ENCODE measurements at regions of chr3 and their contacts with region 1.

Region 1: GRCh38 chr3:12706504-12707253 is 42.8 kb upstream of the RAF1 start:
- DNase-seq: peak; percentile 77
- H3K4me3 ChIP-seq: no peak overlapping the region
- H3K27ac ChIP-seq: no peak overlapping the region
- H3K4me1 ChIP-seq: peaks cover 32% of the 10 kb centered on the region
- H3K27me3 ChIP-seq: no peaks in the 10 kb centered on the region
- CTCF ChIP-seq: peak; percentile 92 to 96

Region 2: GRCh38 chr3:12014613-12015012 is 692.1 kb before region 1 on chr3:
- CTCF ChIA-PET with region 1: no interaction called
- dilution Hi-C with region 1: no loop called
- in situ Hi-C with region 1: no loop called
- intact Hi-C with region 1: no loop called
- DNase-seq: no peak
- H3K4me3 ChIP-seq: no peak overlapping the region
- H3K27ac ChIP-seq: no peak overlapping the region
- H3K4me1 ChIP-seq: no peaks in the 10 kb centered on the region
- H3K27me3 ChIP-seq: peaks cover 3% of the 10 kb centered on the region
- CTCF ChIP-seq: no peak

Region 3: DNA sequence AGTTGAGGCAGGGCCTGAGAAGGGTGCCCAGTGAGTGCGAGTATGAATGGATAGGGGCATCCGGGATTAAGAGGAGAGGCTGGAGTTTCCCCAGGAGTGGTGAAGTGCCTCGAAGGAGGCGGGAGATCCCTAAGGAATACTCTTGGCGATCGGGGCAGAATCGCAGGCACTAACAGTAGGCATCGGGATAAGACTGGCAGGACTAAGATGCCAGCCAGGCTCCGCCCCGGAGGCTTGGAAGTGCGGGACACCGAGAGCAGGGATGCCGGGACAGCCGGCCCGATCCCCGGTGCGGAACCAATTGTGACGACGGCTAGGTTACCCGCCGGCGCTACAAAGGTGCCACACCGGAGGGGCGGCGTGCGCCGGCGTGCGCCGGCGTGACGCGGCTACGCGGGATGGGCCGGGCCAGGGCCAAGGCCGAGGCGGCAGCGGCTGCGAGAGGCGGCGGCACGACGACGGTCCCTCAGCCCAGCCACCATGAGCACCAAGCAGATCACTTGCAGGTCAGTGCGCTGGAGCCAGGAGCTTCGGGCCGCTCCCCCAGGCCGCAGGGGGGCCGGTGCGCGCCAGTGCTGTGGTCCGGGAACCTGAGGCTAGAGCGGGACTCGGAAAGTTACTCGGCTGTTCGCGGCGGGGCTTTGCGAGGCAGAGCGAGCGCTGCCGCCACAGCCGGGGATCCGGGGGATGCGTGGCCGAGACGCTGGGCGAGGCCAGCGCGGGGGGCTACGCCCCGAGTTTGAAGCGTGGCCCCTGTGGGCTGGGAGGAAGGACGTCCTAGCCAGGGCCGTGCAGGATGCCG is 149.8 kb before region 1 on chr3 and contains the start of gene MKRN2:
- CTCF ChIA-PET with region 1: no interaction called
- dilution Hi-C with region 1: no loop called
- in situ Hi-C with region 1: no loop called
- intact Hi-C with region 1: loop called (anchors 2 kb)
- DNase-seq: peak; percentile 89
- H3K4me3 ChIP-seq: peak within 1 kb of the TSS; percentile 95 to 97 (median 96)
- H3K27ac ChIP-seq: peak within 1 kb of the TSS; percentile 87
- H3K4me1 ChIP-seq: peaks cover 19% of the 10 kb centered on the region
- H3K27me3 ChIP-seq: no peaks in the 10 kb centered on the region
- CTCF ChIP-seq: no peak
- total RNA-seq, gene MKRN2: 26.3 to 35.0 TPM

Region 4: DNA sequence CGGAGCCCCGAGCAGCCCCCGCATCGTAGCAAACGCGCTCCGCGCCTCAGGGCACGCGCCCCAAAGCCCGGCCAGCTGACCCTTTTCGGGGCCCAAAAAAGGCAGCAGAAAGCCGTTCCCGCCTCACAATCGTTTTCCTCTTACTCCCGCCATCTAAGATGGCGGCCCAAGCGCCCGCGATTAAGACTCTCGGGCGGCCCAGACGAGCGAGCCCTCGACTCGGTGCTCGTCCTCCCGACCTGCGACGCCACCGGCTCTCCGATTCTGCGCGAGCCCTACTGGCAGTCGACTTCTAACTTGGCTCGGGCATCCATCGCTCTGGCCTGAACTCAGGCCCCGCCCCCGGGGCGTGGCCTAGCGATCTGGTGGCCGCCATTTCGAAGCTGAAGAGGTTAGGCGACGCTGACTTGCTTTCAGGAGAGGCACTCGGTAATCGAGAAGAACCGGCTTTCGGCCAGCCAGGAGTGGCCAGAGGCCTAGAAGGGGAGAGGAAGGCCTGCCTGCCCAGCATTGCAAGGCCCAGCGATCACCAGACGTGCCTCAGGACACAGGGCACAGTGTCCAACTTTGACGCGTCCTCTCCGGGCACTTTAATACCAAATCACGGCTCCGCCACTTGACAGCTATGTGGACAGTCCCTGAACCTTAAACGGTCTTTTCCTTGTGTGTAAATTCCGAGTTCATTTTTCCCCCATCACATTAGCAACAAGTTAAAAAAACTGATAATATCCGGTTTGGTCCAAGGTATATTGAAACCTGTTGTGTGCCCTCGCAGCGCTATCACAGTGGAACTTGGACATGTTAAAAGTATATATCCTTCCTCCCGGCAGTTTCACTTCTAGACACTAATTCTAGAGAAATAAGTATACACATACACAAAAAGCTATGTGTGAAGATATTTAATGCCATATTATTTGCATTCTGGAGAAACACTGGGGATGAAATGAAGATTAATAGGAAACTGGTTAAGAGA is 42.5 kb before region 1 on chr3 and contains the start of gene RAF1:
- CTCF ChIA-PET with region 1: interaction called, 4 read pairs
- dilution Hi-C with region 1: no loop called
- in situ Hi-C with region 1: no loop called
- intact Hi-C with region 1: loop called (anchors 1 kb)
- DNase-seq: peak; percentile 97
- H3K4me3 ChIP-seq: peak within 1 kb of the TSS; percentile 77 to 89 (median 79)
- H3K27ac ChIP-seq: peak within 1 kb of the TSS; percentile 84
- H3K4me1 ChIP-seq: peaks cover 13% of the 10 kb centered on the region
- H3K27me3 ChIP-seq: no peaks in the 10 kb centered on the region
- CTCF ChIP-seq: no peak
- total RNA-seq, gene RAF1: 68.1 to 72.8 TPM

Region 5: DNA sequence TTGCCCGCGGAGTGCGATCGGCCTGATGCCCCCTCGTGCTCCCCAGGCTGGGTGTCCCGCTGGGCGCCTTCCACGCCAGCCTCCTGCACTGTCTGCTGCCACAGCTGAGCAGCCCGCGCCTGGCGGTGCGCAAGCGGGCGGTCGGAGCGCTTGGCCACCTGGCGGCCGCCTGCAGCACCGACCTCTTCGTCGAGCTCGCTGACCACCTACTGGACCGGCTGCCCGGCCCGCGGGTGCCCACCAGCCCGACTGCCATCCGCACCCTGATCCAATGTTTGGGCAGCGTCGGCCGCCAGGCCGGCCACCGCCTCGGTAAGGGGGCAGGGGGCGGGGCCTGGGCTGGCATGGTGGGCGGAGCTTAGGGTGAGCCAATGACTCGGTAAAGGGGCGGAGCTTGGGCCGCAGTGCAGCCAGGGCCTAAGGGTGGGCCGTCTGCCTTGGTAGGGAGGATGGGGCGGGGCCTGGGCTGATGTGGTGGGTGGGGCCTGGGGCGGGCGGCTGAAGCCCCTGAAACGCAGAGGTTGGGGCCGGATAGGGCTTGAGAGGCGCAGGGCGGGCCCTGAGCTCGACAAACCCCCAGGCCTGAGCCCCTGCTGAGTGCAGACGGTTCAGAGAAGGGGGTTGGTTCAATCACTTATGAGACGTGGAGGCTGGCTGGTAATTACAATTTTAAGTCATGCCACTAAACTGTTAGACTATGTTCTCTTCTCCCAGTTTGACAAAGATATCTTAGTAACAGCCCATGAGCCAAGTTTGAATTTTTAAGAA is 103.5 kb after region 1 on chr3:
- CTCF ChIA-PET with region 1: interaction called, 3 read pairs
- dilution Hi-C with region 1: no loop called
- in situ Hi-C with region 1: no loop called
- intact Hi-C with region 1: loop called (anchors 1 kb)
- DNase-seq: peak; percentile 77
- H3K4me3 ChIP-seq: peak overlapping the region; percentile 49 to 70 (median 58)
- H3K27ac ChIP-seq: no peak overlapping the region
- H3K4me1 ChIP-seq: peaks cover 6% of the 10 kb centered on the region
- H3K27me3 ChIP-seq: no peaks in the 10 kb centered on the region
- CTCF ChIP-seq: peak; percentile 40 to 86

Region 6: DNA sequence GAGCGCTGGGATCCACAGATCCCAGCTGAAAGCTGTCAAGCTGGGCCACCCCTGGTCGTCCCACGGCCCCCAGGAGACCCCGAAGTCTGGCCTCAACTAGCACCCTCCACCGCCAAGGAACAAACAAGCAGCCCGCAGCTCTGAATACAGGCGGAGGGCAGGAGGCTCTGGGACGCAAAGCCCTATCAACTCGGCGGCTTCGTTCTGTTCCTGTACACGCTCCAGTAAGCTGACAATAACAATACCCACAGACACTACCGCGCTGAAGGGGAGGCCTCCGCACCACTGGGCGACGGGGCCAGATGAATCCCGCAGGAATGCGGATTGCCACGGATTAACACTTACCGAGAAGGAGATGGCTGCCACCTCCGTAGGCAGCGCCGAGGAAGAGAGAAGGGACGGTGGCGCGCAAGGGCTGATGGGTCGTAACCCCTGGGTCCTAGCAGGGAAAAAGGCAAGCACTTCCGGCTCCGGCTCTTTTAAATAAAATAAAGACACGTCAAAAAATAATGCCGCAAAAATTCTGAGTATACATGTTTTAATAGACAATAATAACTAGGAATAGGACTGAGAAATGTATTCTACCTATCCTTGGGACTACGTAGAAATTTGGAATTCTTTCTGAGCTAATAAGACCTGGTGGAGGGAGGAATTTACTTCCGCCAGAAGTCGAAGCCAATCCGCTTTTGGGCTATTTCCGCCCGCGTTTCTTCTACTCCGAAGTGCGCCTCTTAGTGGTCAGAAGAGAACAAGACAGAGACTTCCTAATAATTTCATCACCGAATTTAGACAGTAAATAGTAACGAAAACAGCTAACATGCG is 134.7 kb after region 1 on chr3 and contains the start of gene RPL32:
- CTCF ChIA-PET with region 1: interaction called, 3 read pairs
- dilution Hi-C with region 1: no loop called
- in situ Hi-C with region 1: no loop called
- intact Hi-C with region 1: loop called (anchors 1 kb)
- DNase-seq: peak; percentile 89
- H3K4me3 ChIP-seq: peak within 1 kb of the TSS; percentile 89 to 91 (median 89)
- H3K27ac ChIP-seq: peak within 1 kb of the TSS; percentile 97
- H3K4me1 ChIP-seq: peaks cover 26% of the 10 kb centered on the region
- H3K27me3 ChIP-seq: no peaks in the 10 kb centered on the region
- CTCF ChIP-seq: peak; percentile 73 to 91
- total RNA-seq, gene RPL32: 686 to 1,631 TPM

Region 7: GRCh38 chr3:12984023-12984823 is 277.5 kb after region 1 on chr3:
- CTCF ChIA-PET with region 1: no interaction called
- dilution Hi-C with region 1: no loop called
- in situ Hi-C with region 1: no loop called
- intact Hi-C with region 1: loop called (anchors 5 kb)
- DNase-seq: peak; percentile 39
- H3K4me3 ChIP-seq: no peak overlapping the region
- H3K27ac ChIP-seq: no peak overlapping the region
- H3K4me1 ChIP-seq: no peaks in the 10 kb centered on the region
- H3K27me3 ChIP-seq: peaks cover 4% of the 10 kb centered on the region
- CTCF ChIP-seq: peak; percentile 77 to 86

Measured in mammary epithelial cell (primary cell).